ENCODE measurements at regions of chr5 and their contacts with region 1.

Region 1: DNA sequence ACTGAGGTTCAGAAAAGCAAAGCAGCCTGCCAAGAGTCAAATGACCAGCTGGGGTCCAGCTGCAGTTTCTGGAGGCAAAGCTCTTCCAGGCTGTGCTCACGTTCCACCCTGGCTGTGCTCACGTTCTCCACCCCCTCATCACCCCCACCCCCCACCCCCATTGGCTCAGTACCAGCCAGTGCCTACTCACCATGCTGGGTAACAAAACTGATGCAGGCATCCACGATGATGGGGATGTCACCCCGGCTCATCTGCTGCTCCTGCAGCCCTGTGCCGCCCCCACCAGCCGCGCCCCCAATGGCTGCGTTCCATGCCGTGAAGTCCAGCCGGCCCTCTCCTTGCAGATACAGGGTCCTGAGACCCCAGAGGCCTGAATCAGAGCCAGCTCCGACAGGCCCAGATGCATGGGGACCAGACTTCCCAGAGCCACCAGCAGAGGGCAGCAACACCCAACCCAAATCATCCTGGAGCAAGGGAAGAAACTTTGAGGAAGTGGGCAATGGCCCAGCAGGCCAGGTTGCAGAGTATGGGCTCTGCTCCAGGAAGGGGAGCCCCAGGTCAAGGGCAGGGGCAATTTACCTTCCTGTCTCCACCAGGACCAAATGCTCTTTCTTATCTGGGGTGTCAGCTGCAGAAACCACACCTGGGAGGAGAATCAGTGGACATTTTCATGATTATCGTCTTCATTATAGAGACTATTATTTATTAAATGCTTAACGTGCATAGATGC is 13.7 kb upstream of the FCHSD1 start:
- DNase-seq: no peak
- H3K4me3 ChIP-seq: no peak overlapping the region
- CTCF ChIP-seq: peak; percentile 90

Region 2: GRCh38 chr5:141598391-141599350 is 66.2 kb before region 1 on chr5:
- CTCF ChIA-PET with region 1: interaction called, 19 read pairs
- POLR2A ChIA-PET with region 1: no interaction called
- DNase-seq: no peak
- H3K4me3 ChIP-seq: no peak overlapping the region
- CTCF ChIP-seq: no peak

Region 3: GRCh38 chr5:141650851-141651727 is 13.8 kb before region 1 on chr5 and contains the start of gene FCHSD1:
- CTCF ChIA-PET with region 1: interaction called, 56 read pairs
- POLR2A ChIA-PET with region 1: no interaction called
- DNase-seq: no peak
- H3K4me3 ChIP-seq: peak within 1 kb of the TSS; percentile 81
- CTCF ChIP-seq: no peak

Region 4: DNA sequence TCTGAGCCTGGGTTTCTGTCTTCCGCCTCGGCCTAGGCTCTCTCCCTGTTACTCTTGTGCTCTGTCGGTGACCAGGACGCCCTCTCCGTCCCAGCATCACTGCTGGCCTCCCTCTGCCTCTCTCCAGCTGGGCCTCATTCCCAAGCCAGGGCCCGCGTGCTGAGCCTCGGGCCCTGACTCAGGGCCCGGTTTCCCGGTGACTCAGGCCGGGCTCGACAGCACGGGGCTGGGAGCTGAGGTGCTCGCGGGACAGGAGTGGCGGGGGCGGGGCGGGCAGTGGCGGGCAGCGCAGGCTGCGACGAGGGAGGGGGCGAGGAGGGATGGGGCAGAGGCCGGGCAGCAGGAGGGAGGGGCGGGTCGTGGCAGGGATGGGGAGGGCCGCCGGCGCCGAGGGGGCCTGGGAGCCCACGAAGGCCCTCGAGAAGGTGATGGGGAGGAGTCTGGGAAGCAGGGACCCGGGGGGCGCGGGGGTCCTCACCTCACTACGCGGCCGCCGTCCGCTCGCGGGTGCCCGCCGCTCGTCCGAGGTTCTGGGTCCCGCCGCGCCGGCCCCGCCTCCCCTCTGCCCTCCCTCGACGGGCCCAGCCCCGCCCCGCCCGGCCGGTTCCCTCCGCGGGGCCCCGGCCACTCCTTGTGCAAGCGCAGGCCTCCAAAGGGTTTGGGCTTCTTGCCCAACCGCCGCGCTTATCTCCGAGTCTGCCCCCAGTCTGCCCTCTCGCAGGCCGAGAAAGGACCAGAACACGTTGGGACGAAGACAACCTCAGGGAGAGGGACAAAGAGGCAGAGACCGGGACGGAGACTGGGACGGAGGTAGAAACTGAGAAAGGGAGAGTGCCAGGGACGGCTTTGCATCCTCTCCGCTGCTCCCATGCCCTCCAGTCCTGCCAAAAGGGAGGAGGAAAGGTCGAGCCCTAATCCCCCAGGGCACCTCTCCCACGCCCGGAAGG is 17.1 kb after region 1 on chr5 and contains the start of gene ARAP3:
- CTCF ChIA-PET with region 1: interaction called, 26 read pairs
- POLR2A ChIA-PET with region 1: interaction called, 6 read pairs
- DNase-seq: peak; percentile 37
- H3K4me3 ChIP-seq: peak within 1 kb of the TSS; percentile 58
- CTCF ChIP-seq: no peak